Activated CD4-positive, alpha-beta memory T cell treated with anti-CD3 and anti-CD28 coated beads for 36 hours (primary cell): ENCODE measurements at regions of chr2 and their contacts with region 1.

Region 1: GRCh38 chr2:38377050-38377828 is at the start of gene ATL2:
- DNase-seq: peak; percentile 97
- H3K4me3 Mint-ChIP-seq: peak within 1 kb of the TSS; percentile 83
- H3K27ac Mint-ChIP-seq: peak within 1 kb of the TSS; percentile 81
- H3K4me1 Mint-ChIP-seq: peaks cover 55% of the 10 kb centered on the region
- H3K27me3 Mint-ChIP-seq: no peaks in the 10 kb centered on the region
- total RNA-seq, gene ATL2: 51.3 to 53.9 TPM

Region 2: DNA sequence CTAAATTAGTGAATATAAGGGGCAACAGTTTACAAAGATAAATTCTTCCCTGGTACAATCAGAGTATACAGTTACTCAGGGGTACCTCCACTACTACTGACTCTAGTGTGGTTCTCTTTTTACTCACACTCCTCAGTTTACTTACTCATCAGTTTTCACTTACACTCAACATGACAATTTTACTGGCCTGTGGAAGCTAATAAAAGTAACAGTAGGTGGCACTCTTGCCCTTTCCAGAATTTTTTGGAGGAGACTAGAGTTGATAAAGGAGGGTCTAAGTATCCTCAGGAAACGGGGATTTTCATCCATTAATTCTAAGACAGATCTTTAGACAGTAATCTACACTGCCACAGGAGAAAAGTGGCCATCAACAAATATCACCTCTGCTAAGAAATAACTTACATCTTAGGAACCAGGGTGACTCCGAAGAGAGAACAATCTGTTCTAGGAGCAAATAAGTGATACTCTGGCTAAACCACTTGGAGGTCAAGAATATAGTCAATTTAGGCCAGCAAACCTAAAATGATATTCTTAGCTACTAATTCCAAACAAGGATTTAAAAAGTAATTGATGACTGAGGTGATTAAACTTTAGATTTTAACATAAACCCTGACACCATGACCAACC is 61.4 kb before region 1 on chr2:
- CTCF ChIA-PET with region 1: interaction called, 38 read pairs
- POLR2A ChIA-PET with region 1: interaction called, 3 read pairs
- intact Hi-C with region 1: loop called (anchors 1 kb)
- DNase-seq: no peak
- H3K4me3 Mint-ChIP-seq: no peak overlapping the region
- H3K27ac Mint-ChIP-seq: no peak overlapping the region
- H3K4me1 Mint-ChIP-seq: peaks cover 13% of the 10 kb centered on the region
- H3K27me3 Mint-ChIP-seq: no peaks in the 10 kb centered on the region

Region 3: GRCh38 chr2:38387887-38388286 is 10.6 kb after region 1 on chr2:
- CTCF ChIA-PET with region 1: interaction called, 3 read pairs
- POLR2A ChIA-PET with region 1: interaction called, 3 read pairs
- intact Hi-C with region 1: loop called (anchors 1 kb)
- DNase-seq: no peak
- H3K4me3 Mint-ChIP-seq: no peak overlapping the region
- H3K27ac Mint-ChIP-seq: no peak overlapping the region
- H3K4me1 Mint-ChIP-seq: peaks cover 14% of the 10 kb centered on the region
- H3K27me3 Mint-ChIP-seq: peaks cover 9% of the 10 kb centered on the region

Region 4: GRCh38 chr2:38465789-38466127 is 88.5 kb after region 1 on chr2:
- CTCF ChIA-PET with region 1: interaction called, 3 read pairs
- POLR2A ChIA-PET with region 1: interaction called, 3 read pairs
- intact Hi-C with region 1: loop called (anchors 1 kb)
- DNase-seq: peak; percentile 23
- H3K4me3 Mint-ChIP-seq: no peak overlapping the region
- H3K27ac Mint-ChIP-seq: no peak overlapping the region
- H3K4me1 Mint-ChIP-seq: peaks cover 9% of the 10 kb centered on the region
- H3K27me3 Mint-ChIP-seq: peaks cover 6% of the 10 kb centered on the region

Region 5: DNA sequence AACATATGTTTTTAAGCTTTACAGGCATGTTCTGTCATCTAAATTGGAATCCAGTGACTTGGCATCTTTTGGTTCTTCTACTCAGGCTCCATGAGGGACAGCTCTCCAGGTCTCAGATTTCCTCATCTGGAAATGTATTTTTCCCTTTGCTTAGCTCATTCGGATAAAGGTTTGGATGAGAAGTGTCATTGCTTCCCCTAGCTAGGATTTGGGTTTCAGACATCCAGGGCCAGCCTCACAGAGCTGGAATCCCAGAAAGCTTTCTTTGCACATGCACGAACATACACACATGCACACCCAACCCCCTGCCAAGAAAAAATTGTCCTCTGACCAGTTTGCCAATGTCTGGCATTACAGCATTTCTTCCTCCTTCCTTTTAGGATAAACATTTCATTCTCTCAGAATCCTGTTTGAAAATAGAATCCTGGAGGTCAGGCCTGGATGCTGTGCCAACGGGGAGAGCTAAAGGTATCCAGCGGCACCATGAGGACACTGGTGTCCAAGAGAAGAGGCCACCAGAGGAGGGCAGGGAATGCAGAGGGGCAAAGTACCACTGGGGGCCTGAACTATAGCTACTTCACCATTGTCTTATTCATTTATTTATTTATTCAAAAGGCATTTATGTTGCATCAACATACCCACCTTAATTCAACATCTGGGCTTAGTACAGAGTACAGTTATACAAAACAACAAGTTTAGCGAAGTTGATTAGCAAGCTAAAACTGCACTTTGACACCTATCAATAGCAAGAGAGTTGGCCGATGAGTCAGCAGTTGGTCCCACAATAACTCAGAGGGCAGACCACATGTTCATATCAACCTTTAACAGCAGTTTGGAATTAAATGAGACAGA is 97.7 kb after region 1 on chr2:
- CTCF ChIA-PET with region 1: interaction called, 7 read pairs
- POLR2A ChIA-PET with region 1: interaction called, 8 read pairs
- intact Hi-C with region 1: loop called (anchors 1 kb)
- DNase-seq: peak; percentile 73
- H3K4me3 Mint-ChIP-seq: no peak overlapping the region
- H3K27ac Mint-ChIP-seq: no peak overlapping the region
- H3K4me1 Mint-ChIP-seq: peaks cover 31% of the 10 kb centered on the region
- H3K27me3 Mint-ChIP-seq: peaks cover 14% of the 10 kb centered on the region